ENCODE measurements at regions of chr4 and their contacts with region 1.

Region 1: DNA sequence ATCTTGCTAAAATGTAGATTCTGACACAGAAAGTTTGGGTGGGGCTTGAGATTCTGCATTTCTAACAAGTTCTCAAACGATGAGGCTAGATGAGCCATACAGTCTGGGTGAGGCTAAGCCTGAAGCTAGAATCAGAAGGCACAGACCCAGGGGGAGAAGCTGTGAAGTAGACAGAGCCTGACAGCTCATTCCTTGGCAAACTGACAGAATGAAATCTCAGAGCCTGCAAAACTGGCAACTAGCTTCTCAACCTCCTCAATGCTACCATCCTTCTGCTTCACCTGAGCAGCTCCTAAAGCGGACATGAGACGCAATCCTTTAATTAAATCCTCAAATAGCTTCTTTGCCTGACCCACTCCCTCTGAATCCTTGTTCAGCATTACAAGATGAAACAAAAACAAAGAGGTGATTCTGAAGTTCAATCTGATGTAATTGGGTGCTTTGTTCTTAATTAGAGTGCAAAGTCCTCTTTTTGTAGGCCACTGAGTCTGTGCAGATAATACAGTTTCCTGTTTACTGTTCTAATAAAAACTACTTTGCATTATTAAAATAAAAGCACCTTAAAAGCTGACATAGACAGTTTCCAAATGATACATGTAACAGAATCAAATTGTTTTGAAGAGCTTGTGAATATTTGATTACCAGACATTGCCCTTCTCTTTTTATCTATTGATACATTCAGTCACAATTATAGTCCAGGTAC is 71.0 kb upstream of the BMP2K start:
- DNase-seq: no peak
- ATAC-seq: peak; percentile 40
- H3K4me3 ChIP-seq: no peak overlapping the region
- H3K27ac ChIP-seq: no peak overlapping the region
- H3K4me1 ChIP-seq: peaks cover 24% of the 10 kb centered on the region
- H3K27me3 ChIP-seq: no peaks in the 10 kb centered on the region
- CTCF ChIP-seq: no peak
- EP300 ChIP-seq: no peak
- POLR2A ChIP-seq: no peak
- RAD21 ChIP-seq: no peak

Region 2: DNA sequence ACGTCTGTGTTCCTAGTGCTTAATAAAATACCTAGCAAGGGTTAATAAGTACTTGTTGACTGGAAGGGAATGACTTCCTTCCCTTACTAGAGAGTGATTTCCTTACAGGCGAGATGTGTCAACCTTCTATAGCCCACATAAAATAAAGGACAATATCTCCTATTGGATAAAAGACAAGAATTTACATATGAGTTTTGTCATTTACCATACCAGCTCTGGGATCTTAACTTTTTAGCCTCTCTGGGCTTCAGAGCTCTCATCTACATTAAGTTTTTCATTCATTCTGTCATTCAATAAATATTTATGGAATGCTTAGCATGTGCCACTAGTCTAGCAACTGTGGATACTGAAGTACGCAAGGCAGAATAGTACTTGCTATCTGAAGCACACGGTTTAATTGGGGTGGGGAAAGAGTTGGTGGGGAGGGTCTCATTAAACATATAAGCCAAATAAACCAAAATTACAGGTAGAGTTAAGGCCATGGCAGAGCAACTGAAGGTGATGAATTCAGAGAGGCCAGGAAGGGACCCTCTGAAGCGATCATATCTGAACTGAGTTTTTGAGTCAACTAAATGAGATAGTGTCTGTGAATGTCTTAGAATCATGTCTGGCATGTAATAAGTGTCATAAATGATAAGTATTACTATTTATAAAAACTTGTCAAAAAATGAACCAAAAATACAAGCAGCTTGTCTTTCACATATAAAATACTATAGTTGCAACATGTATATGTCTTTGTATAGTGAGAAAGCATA is 20.6 kb before region 1 on chr4:
- CTCF ChIA-PET with region 1: interaction called, 3 read pairs
- POLR2A ChIA-PET with region 1: interaction called, 4 read pairs
- RAD21 ChIA-PET with region 1: interaction called, 3 read pairs
- SMC1A ChIA-PET with region 1: interaction called, 11 read pairs
- in situ Hi-C with region 1: no loop called
- intact Hi-C with region 1: no loop called
- DNase-seq: no peak
- ATAC-seq: no peak
- H3K4me3 ChIP-seq: no peak overlapping the region
- H3K27ac ChIP-seq: no peak overlapping the region
- H3K4me1 ChIP-seq: no peaks in the 10 kb centered on the region
- H3K27me3 ChIP-seq: no peaks in the 10 kb centered on the region
- CTCF ChIP-seq: no peak
- EP300 ChIP-seq: no peak
- POLR2A ChIP-seq: no peak
- RAD21 ChIP-seq: no peak

Region 3: DNA sequence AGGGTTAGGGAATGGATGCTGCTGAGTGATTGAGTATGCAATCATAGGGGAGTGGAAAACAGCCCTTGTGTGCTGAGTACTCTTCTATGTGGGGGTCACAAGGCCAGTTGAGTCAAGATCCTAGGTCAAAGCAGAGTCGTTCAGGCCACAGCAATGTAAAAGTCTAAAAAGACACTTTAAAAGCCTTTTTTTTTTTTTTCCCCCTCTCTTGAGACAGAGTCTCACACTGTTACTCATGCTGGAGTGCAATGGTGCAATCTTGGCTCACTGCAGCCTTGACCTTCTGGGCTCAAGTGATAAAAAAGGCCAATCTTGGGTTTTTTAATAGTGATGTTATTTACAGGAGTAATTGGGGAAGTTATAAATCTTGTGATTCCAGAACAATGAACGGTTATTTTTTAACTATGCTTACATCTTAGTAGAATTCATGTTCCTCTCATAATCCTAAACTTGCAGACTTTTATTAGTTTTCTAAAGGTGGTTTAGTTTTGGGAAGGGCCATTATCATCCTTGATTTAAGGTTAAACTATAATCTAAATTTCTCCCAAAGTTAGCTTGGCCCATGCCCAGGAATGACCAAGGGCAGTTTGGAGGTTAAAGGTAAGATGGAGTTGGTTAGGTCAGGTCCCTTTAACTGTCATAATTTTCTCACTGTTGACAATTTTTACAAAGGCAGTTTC is 11.2 kb before region 1 on chr4:
- CTCF ChIA-PET with region 1: interaction called, 4 read pairs
- POLR2A ChIA-PET with region 1: interaction called, 4 read pairs
- RAD21 ChIA-PET with region 1: interaction called, 3 read pairs
- SMC1A ChIA-PET with region 1: interaction called, 12 read pairs
- in situ Hi-C with region 1: no loop called
- intact Hi-C with region 1: no loop called
- DNase-seq: no peak
- ATAC-seq: no peak
- H3K4me3 ChIP-seq: no peak overlapping the region
- H3K27ac ChIP-seq: no peak overlapping the region
- H3K4me1 ChIP-seq: 0 out of 2 replicates have a peak, but pooled peaks cover 5% of the 10 kb centered on the region
- H3K27me3 ChIP-seq: no peaks in the 10 kb centered on the region
- CTCF ChIP-seq: no peak
- EP300 ChIP-seq: no peak
- POLR2A ChIP-seq: no peak
- RAD21 ChIP-seq: no peak